Activated CD4-positive, alpha-beta memory T cell treated with anti-CD3 and anti-CD28 coated beads for 36 hours (primary cell): ENCODE measurements at regions of chr3 and their contacts with region 1.

Region 1: DNA sequence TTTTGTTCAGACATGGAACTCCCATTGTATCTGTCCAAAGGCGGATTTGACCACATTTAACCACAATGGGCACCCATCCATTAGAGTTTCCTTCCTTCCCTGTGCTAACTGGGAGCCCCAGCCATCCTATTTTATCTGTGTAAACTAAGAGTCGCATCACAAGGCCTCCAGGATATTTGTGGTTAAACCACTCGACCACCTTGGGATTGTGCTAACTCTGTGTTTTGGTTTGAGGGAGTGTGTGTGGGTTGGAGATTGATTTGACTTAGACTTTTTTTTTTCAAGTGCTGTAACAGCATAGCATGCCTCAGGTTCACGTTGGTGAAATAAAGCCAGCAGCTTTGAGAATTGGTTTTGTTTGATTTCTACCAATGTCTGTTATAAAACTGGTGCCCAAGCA is 100.4 kb upstream of the TP63 start:
- DNase-seq: peak; percentile 26
- H3K4me3 Mint-ChIP-seq: no peak overlapping the region
- H3K27ac Mint-ChIP-seq: peak overlapping the region; percentile 67
- H3K4me1 Mint-ChIP-seq: peaks cover 23% of the 10 kb centered on the region
- H3K27me3 Mint-ChIP-seq: peaks cover 1% of the 10 kb centered on the region

Region 2: GRCh38 chr3:189304446-189305351 is 226.1 kb before region 1 on chr3:
- CTCF ChIA-PET with region 1: interaction called, 3 read pairs
- POLR2A ChIA-PET with region 1: interaction called, 6 read pairs
- intact Hi-C with region 1: loop called (anchors 1 kb)
- DNase-seq: peak; percentile 46
- H3K4me3 Mint-ChIP-seq: no peak overlapping the region
- H3K27ac Mint-ChIP-seq: peak overlapping the region; percentile 89
- H3K4me1 Mint-ChIP-seq: peaks cover 49% of the 10 kb centered on the region
- H3K27me3 Mint-ChIP-seq: no peaks in the 10 kb centered on the region

Region 3: DNA sequence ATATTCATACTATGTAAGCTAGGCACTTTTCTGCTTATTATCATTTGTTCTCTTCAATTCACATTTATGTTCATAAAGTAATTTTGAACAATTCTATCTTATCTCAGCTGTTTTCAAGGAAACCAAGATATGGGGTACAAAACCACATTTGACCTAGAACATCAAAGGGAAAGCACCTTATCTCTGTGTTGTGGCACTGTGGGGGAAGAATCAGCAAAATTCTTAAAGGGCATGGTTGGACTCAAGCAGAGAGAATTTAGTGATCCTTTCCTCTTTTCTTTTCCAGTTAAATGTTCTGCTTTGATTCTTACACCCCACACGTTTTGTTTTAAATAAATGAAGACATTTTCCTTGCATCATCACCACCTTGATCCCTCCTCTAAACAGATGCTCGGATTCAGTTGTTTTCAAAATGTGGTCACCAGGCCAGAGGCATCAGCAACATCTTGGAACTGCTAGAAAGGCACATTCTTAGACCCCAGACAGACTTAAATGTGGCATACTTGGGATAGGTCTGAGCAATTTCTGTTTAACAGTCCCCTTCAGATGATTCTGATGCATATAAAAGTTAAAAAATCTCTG is 28.1 kb before region 1 on chr3:
- CTCF ChIA-PET with region 1: no interaction called
- POLR2A ChIA-PET with region 1: interaction called, 4 read pairs
- intact Hi-C with region 1: loop called (anchors 2 kb)
- DNase-seq: no peak
- H3K4me3 Mint-ChIP-seq: no peak overlapping the region
- H3K27ac Mint-ChIP-seq: no peak overlapping the region
- H3K4me1 Mint-ChIP-seq: peaks cover 12% of the 10 kb centered on the region
- H3K27me3 Mint-ChIP-seq: peaks cover 5% of the 10 kb centered on the region

Region 4: DNA sequence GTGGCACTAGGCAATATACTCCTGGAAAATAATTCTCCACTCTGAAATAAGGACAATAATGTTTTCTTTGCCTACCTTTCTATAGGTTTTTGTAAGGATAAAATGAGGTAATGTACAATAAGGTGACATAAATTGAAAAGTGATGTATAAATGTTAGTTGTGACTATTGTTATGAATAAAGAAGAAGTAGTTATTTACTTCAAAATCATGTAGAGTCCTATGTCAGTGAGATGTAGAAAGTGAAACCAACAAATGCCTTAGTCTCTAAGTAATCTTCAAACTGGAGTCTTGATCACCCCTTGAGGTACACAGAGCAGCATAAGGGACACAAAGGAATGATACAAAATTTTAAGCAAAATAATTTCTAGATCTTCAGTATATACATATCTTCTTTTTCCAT is 40.1 kb after region 1 on chr3:
- CTCF ChIA-PET with region 1: interaction called, 4 read pairs
- POLR2A ChIA-PET with region 1: no interaction called
- intact Hi-C with region 1: loop called (anchors 1 kb)
- DNase-seq: no peak
- H3K4me3 Mint-ChIP-seq: no peak overlapping the region
- H3K27ac Mint-ChIP-seq: no peak overlapping the region
- H3K4me1 Mint-ChIP-seq: peaks cover 16% of the 10 kb centered on the region
- H3K27me3 Mint-ChIP-seq: peaks cover 1% of the 10 kb centered on the region

Region 5: DNA sequence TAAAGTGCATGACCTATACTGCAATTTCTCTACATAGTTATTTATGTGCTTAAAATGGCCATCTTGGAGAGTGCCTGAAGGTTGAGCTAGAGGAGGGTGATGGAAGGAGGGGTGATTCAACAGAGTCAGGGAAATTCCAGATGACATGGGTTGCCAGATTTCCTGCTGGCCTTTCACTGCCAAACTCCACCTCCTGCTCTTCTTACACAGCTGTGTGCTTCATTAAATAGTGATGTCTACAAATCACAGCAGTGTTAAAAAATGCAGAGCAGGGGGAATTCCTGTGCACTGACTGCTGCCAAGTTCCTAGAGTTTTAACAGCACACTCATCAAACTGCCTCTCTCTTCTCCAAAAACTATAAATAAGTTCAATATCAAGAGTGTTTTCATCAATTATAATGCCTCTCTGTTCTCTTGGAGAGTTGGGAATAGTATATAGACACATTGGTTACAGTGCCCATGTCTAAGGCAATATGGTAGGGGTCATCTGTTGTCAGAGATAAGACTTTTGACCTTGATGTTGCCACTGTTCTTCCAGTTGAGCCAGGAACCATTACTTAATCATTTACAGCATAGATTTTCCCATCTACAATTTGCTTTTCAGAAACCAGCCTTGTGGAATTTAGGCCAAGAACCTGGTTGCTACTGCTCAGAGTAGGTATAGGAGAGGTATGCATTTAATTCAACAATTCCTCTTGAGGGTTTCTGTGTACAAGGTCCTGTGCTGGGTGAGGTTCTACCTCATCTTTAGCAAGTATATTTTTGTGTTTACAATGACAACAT is 180.0 kb after region 1 on chr3:
- CTCF ChIA-PET with region 1: no interaction called
- POLR2A ChIA-PET with region 1: no interaction called
- intact Hi-C with region 1: no loop called
- DNase-seq: no peak
- H3K4me3 Mint-ChIP-seq: no peak overlapping the region
- H3K27ac Mint-ChIP-seq: no peak overlapping the region
- H3K4me1 Mint-ChIP-seq: peaks cover 12% of the 10 kb centered on the region
- H3K27me3 Mint-ChIP-seq: no peaks in the 10 kb centered on the region